AG04449 (cell line): ENCODE measurements at regions of chr19 and their contacts with region 1.

Region 1: DNA sequence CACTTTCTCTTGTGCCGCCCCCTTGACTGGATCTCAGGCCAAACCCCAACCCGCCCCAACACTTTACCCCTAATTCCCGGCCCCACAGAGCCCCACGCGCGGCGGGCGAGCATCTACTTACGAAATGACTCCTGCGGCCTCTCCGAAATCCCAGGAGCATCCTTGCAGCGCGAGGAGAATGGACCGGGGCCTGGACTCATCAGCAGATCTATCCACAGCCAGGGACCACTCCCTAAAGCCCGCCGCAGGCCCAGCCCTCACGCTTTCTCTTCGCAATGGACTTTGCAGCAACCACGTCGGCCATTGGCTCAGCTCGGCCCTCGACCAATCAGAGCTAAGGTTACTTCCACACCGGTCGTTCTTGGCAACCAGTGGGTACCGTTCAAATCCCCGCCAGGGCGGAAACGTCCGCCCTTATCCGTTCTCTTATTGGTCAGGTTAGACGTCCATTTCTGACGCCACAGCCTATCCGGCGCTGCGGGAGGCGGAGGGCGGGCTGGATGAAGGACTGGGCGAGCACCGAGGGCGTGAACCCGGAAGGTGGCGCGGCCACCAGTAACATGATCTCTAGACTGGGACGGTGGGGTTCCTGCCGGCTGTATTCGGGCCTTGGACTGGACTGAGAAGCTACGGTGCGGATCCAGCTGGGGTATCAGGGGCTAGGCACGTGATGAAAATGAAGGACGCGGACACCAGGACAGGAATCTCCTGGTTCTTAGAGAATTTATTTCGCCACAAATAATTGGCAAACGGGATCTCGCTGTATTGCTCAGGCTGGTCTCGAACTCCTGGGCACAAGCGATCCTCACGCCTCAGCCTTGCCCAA is at the starts of genes CEP89 and FAAP24:
- DNase-seq: peak; percentile 95
- H3K4me3 ChIP-seq: peak within 1 kb of the TSS; percentile 84
- CTCF ChIP-seq: no peak

Region 2: DNA sequence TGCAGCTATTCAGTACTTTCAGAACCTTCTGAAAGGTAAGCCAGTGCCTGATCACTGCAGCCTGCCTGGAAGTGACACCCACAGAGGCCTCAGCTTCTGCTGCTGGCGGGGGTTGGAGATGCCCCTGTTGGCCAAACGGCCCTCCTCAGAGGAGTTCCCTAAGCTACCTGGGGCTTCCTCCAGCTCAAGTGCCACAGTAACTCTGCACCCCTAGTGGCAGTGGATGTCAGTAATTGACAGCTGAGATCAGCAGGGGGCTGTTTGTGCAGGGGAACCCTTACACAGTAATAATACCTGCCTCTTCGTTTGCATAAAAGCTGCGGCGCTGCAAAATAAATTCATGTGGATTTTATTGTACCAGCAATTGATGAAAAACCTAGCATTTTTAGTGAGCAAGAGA is 223.4 kb before region 1 on chr19:
- CTCF ChIA-PET with region 1: no interaction called
- POLR2A ChIA-PET with region 1: no interaction called
- DNase-seq: no peak
- H3K4me3 ChIP-seq: no peak overlapping the region
- CTCF ChIP-seq: no peak

Region 3: DNA sequence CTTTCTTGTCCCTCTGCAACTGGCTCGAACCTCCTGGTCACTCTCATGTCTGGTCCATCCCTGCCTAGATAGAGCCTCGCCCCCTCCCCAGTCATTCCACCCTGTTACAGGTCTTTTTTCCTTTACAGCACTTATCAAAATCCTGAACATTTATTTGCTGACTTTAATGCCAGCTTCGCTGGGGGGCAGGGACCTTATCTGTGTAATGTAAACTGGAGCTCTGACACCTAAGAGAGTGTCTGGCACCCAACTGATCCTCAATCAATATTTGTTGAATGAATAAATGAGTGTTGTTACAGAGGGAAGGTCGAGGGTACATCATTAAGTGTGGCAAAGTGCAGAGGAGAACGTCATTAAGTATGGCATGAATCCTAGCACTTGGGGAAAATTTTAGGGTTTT is 16.8 kb after region 1 on chr19:
- CTCF ChIA-PET with region 1: interaction called, 15 read pairs
- POLR2A ChIA-PET with region 1: no interaction called
- DNase-seq: no peak
- H3K4me3 ChIP-seq: no peak overlapping the region
- CTCF ChIP-seq: no peak

Region 4: DNA sequence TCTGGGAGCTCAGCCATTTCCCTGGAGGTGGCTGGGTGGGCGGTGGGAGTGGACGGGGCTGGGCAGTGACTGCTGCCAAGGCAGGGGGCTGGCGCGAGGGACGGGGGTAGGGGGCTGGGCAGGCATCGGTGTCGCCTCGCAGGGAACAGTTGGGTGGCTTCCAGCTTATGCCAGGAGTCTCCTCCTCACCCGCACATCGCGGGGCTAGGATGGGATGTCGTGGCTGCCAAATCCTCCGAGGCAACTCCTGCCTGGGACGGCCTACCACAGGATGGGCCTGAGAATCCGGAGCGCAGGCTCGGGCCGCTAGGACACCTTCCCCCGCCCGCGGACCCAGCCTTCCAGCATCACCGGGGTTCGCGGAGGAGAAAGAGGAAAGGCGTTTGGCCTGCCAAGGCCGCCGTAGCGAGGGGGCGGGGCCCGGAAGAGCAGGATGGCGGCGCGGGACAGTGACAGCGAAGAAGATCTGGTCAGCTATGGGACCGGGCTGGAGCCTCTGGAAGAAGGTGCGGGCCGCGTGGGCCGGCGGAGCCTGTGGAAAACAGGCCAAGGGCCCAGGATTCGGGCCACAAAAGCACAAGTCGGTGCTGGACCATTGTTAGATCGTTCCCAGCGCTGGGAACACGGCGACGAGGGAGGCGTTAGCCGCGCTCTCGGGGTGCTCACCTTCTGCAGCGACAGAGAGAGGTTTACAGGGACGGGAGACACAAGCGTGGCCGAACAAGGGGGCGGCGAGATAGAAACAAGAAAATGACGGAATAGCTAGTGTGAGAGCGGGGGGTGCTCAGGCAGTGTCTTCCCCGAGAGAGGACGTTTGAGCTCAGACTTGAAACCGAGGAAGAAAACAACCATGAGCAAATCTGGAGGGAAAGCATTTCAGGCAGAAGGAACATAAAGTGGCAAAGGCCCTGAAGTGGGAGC is 109.1 kb after region 1 on chr19 and contains the start of gene GPATCH1:
- CTCF ChIA-PET with region 1: interaction called, 10 read pairs
- POLR2A ChIA-PET with region 1: no interaction called
- DNase-seq: no peak
- H3K4me3 ChIP-seq: peak within 1 kb of the TSS; percentile 95
- CTCF ChIP-seq: no peak

Region 5: DNA sequence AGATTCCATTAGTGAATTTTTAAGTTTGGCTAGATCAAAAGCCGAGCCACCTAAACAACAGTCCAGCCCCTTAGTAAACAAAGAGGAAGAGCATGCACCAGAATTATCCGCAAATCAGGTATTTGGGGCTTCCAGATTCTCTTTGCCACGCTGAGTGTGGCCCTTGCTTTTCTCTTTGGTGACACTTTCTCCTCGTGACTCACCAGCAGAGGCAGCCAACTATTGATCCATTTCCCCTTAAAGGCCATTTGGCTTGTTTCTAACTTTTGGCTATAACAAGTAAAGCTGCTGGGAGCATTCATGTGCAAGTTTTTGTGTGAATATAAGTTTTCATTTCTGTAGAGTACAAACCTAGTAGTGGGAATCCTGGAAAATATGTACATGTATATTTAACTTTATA is 142.4 kb after region 1 on chr19:
- CTCF ChIA-PET with region 1: interaction called, 89 read pairs
- POLR2A ChIA-PET with region 1: no interaction called
- DNase-seq: no peak
- H3K4me3 ChIP-seq: no peak overlapping the region
- CTCF ChIP-seq: no peak